Activated B cell treated with CpG ODN at 0.5 μM for 24 hours (primary cell): ENCODE measurements at regions of chr13 and their contacts with region 1.

Region 1: DNA sequence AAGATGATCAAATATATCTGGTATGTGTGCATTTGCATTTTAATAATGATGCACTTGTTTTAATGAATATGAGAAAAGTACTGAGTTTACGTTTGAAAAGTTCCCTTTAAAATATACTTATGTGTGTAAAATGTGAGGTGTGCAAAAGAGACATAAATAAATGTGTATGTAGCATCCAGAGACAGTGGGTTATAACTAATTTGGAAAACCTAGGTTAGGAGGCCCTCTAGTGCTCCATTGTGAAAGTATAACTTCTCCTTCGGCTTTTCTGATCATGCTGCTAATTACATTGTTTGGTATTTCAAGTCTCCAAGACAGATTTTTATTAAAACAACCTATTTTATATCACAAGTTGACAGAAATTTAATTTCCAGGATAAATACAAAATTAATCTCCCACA is 30.1 kb downstream of the SCEL start:
- DNase-seq: no peak
- ATAC-seq: peak; percentile 71
- H3K4me3 Mint-ChIP-seq: no peak overlapping the region
- H3K27ac Mint-ChIP-seq: no peak overlapping the region
- H3K4me1 Mint-ChIP-seq: no peaks in the 10 kb centered on the region
- H3K27me3 Mint-ChIP-seq: no peaks in the 10 kb centered on the region
- CTCF ChIP-seq: no peak

Region 2: DNA sequence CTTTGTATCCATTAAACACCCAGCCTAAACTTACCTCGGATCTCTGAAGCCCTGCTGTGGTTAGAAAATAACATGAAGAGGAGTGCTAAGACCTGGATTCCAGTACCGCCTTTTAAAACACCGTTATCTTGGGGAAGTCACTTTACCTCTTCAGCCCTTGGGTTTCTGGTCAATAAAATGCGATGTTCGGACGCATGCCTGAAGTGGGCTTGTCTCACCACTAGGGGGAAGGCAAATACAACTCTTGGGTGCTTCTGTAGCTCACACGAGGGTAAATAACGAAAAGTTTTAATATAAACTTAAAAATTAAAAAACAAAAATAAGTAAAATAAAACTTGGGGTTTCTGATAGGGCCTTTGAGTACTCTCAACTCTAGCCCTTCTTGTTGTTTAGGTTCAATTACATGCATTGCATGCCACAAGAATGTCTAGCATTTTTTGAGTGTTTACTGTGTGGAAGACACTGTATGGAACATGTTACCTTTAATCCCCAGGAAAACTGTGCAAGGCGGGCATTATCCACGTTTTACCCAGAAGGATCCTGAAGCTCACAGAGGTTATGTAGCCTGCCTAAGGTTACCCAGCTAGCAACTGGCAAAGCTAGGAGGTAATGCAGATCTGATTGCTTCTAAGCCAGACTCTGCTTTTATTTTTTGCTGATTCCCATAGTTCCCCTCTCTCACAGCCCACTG is 1689.1 kb before region 1 on chr13:
- CTCF ChIA-PET with region 1: no interaction called
- POLR2A ChIA-PET with region 1: no interaction called
- intact Hi-C with region 1: loop called (anchors 10 kb)
- DNase-seq: no peak
- ATAC-seq: peak; percentile 81
- H3K4me3 Mint-ChIP-seq: no peak overlapping the region
- H3K27ac Mint-ChIP-seq: no peak overlapping the region
- H3K4me1 Mint-ChIP-seq: peaks cover 2% of the 10 kb centered on the region
- H3K27me3 Mint-ChIP-seq: peaks cover 13% of the 10 kb centered on the region
- CTCF ChIP-seq: no peak

Region 3: GRCh38 chr13:77184455-77184854 is 381.2 kb before region 1 on chr13:
- CTCF ChIA-PET with region 1: interaction called, 4 read pairs
- POLR2A ChIA-PET with region 1: no interaction called
- intact Hi-C with region 1: loop called (anchors 1 kb)
- DNase-seq: peak; percentile 23
- ATAC-seq: peak; percentile 97
- H3K4me3 Mint-ChIP-seq: peak overlapping the region; percentile 61
- H3K27ac Mint-ChIP-seq: peak overlapping the region; percentile 95
- H3K4me1 Mint-ChIP-seq: peaks cover 28% of the 10 kb centered on the region
- H3K27me3 Mint-ChIP-seq: no peaks in the 10 kb centered on the region
- CTCF ChIP-seq: no peak

Region 4: GRCh38 chr13:77274126-77274525 is 291.5 kb before region 1 on chr13:
- CTCF ChIA-PET with region 1: interaction called, 3 read pairs
- POLR2A ChIA-PET with region 1: no interaction called
- intact Hi-C with region 1: loop called (anchors 5 kb)
- DNase-seq: no peak
- ATAC-seq: no peak
- H3K4me3 Mint-ChIP-seq: no peak overlapping the region
- H3K27ac Mint-ChIP-seq: peak overlapping the region; percentile 59
- H3K4me1 Mint-ChIP-seq: peaks cover 20% of the 10 kb centered on the region
- H3K27me3 Mint-ChIP-seq: no peaks in the 10 kb centered on the region
- CTCF ChIP-seq: no peak

Region 5: DNA sequence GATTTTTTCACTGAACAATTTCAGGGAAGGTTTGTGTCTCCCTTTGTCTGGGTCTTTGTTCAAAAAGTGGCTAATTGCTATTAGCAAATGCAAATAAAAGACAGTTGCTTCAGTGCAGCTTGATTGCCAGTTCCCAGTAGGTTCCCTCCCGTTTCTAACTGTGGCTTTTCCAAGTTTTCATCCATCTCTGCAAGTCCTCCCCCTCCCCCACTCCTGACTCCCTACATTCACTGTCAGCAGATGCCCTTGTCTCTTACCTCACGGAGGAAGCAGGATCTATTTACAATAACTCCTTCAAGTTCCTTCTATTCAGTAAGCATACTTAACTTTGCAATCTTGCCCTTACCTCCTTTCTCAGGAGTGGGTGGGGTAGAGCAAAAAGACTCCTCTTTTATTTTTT is 85.6 kb before region 1 on chr13:
- CTCF ChIA-PET with region 1: no interaction called
- POLR2A ChIA-PET with region 1: no interaction called
- intact Hi-C with region 1: no loop called
- DNase-seq: no peak
- ATAC-seq: no peak
- H3K4me3 Mint-ChIP-seq: no peak overlapping the region
- H3K27ac Mint-ChIP-seq: no peak overlapping the region
- H3K4me1 Mint-ChIP-seq: peaks cover 13% of the 10 kb centered on the region
- H3K27me3 Mint-ChIP-seq: no peaks in the 10 kb centered on the region
- CTCF ChIP-seq: no peak

Region 6: DNA sequence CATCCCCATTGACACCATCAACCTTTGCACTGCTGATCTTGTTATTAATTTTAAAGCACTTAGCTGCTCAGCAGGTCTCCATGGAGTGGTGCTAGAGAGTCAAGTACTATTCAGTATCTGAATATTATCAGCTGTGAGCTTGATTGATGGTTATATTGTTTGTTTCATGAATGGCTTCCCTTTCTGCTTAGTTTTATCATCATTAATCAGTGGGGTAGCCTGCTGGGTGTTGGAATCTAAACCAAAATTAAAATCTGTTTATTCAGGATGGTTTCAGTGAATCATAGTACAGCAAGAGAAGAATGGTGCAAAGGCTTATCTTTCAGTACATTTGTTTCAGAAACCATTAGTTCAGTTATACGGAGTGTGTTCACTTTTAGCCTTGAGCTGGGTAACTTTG is 72.7 kb before region 1 on chr13:
- CTCF ChIA-PET with region 1: interaction called, 97 read pairs
- POLR2A ChIA-PET with region 1: interaction called, 11 read pairs
- intact Hi-C with region 1: loop called (anchors 1 kb)
- DNase-seq: no peak
- ATAC-seq: peak; percentile 79
- H3K4me3 Mint-ChIP-seq: no peak overlapping the region
- H3K27ac Mint-ChIP-seq: no peak overlapping the region
- H3K4me1 Mint-ChIP-seq: no peaks in the 10 kb centered on the region
- H3K27me3 Mint-ChIP-seq: peaks cover 3% of the 10 kb centered on the region
- CTCF ChIP-seq: no peak

Region 7: GRCh38 chr13:77506874-77507273 is 58.8 kb before region 1 on chr13:
- CTCF ChIA-PET with region 1: interaction called, 11 read pairs
- POLR2A ChIA-PET with region 1: no interaction called
- intact Hi-C with region 1: loop called (anchors 2 kb)
- DNase-seq: no peak
- ATAC-seq: no peak
- H3K4me3 Mint-ChIP-seq: no peak overlapping the region
- H3K27ac Mint-ChIP-seq: no peak overlapping the region
- H3K4me1 Mint-ChIP-seq: peaks cover 27% of the 10 kb centered on the region
- H3K27me3 Mint-ChIP-seq: peaks cover 7% of the 10 kb centered on the region
- CTCF ChIP-seq: no peak